Naive thymus-derived CD4-positive, alpha-beta T cell (primary cell): ENCODE measurements at regions of chr5 and their contacts with region 1.

Region 1: GRCh38 chr5:140547508-140548299 is at the start of gene EIF4EBP3:
- DNase-seq: peak; percentile 76 to 90 (median 88)
- ATAC-seq: peak; percentile 98
- H3K4me3 ChIP-seq: peak within 1 kb of the TSS; percentile 83
- H3K4me3 Mint-ChIP-seq: peak within 1 kb of the TSS; percentile 85 to 99 (median 92)
- H3K27ac ChIP-seq: peak within 1 kb of the TSS; percentile 89
- H3K27ac Mint-ChIP-seq: peak within 1 kb of the TSS; percentile 93 to 99 (median 98)
- H3K4me1 ChIP-seq: peaks cover 12 to 20% of the 10 kb centered on the region in 2 donors
- H3K4me1 Mint-ChIP-seq: peaks cover 22 to 49% (median 37%) of the 10 kb centered on the region in 7 donors
- H3K27me3 ChIP-seq: no peaks in the 10 kb centered on the region
- H3K27me3 Mint-ChIP-seq: no peaks in the 10 kb centered on the region
- total RNA-seq, gene EIF4EBP3: 12.5 to 19.5 (median 16.2) TPM

Region 2: GRCh38 chr5:140632150-140633020 is 84.7 kb after region 1 on chr5:
- CTCF ChIA-PET with region 1: interaction called, 12 read pairs
- POLR2A ChIA-PET with region 1: interaction called, 23 read pairs
- intact Hi-C with region 1: loop called (anchors 1 kb)
- DNase-seq: peak; percentile 29 to 64 (median 51)
- ATAC-seq: peak; percentile 81
- H3K4me3 ChIP-seq: peak overlapping the region; percentile 87
- H3K4me3 Mint-ChIP-seq: peak overlapping the region; percentile 89 to 99 (median 92)
- H3K27ac ChIP-seq: peak overlapping the region; percentile 41
- H3K27ac Mint-ChIP-seq: peak overlapping the region; percentile 29 to 88 (median 79)
- H3K4me1 ChIP-seq: peaks cover 0 to 9% of the 10 kb centered on the region in 2 donors
- H3K4me1 Mint-ChIP-seq: peaks cover 16 to 36% (median 17%) of the 10 kb centered on the region in 7 donors
- H3K27me3 ChIP-seq: no peaks in the 10 kb centered on the region
- H3K27me3 Mint-ChIP-seq: peaks cover 0 to 26% (median 0%) of the 10 kb centered on the region in 5 donors

Region 3: DNA sequence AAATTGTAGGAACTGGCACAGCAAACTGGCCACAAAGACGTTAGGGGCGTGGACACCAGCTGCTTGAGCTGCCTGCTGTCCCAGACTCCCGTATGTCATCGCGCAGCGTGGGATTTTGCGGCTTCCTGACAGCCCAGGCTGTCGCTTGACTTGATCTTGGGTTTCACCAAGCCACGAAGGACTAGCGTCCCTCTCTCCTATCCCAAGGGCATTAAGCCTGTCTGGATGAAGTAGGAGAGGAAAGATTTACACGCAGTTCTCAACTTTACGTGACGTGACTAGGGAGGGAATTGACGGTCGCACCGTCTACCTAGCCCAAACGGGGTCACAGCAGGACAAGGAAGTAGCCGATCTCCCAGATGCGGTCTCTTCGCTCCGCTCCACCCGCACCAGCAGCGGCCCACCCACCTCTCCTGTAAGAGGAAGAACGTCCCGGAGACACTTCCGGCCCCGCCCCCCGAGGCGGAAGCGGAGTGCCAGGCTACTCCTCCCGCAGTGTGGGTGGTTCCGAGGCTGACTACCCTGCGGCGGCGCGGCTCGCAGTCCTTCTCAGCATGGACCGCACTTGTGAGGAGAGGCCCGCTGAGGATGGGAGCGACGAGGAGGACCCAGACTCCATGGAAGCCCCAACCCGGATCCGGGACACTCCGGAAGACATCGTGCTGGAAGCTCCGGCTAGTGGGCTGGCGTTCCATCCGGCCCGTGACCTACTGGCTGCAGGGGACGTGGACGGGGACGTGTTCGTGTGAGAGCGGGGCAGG is 116.8 kb after region 1 on chr5 and contains the start of gene WDR55:
- CTCF ChIA-PET with region 1: no interaction called
- POLR2A ChIA-PET with region 1: interaction called, 3 read pairs
- intact Hi-C with region 1: loop called in 1 of 2 experiments (anchors 1 kb)
- DNase-seq: peak; percentile 91 to 98 (median 94)
- ATAC-seq: peak; percentile 97
- H3K4me3 ChIP-seq: peak within 1 kb of the TSS; percentile 95
- H3K4me3 Mint-ChIP-seq: peak within 1 kb of the TSS; percentile 96 to 100 (median 98)
- H3K27ac ChIP-seq: peak within 1 kb of the TSS; percentile 97
- H3K27ac Mint-ChIP-seq: peak within 1 kb of the TSS; percentile 93 to 100 (median 98)
- H3K4me1 ChIP-seq: peaks cover 0 to 8% of the 10 kb centered on the region in 2 donors
- H3K4me1 Mint-ChIP-seq: peaks cover 17 to 48% (median 38%) of the 10 kb centered on the region in 7 donors
- H3K27me3 ChIP-seq: no peaks in the 10 kb centered on the region
- H3K27me3 Mint-ChIP-seq: no peaks in the 10 kb centered on the region
- total RNA-seq, gene WDR55: 28.5 to 47.6 (median 37.8) TPM

Region 4: DNA sequence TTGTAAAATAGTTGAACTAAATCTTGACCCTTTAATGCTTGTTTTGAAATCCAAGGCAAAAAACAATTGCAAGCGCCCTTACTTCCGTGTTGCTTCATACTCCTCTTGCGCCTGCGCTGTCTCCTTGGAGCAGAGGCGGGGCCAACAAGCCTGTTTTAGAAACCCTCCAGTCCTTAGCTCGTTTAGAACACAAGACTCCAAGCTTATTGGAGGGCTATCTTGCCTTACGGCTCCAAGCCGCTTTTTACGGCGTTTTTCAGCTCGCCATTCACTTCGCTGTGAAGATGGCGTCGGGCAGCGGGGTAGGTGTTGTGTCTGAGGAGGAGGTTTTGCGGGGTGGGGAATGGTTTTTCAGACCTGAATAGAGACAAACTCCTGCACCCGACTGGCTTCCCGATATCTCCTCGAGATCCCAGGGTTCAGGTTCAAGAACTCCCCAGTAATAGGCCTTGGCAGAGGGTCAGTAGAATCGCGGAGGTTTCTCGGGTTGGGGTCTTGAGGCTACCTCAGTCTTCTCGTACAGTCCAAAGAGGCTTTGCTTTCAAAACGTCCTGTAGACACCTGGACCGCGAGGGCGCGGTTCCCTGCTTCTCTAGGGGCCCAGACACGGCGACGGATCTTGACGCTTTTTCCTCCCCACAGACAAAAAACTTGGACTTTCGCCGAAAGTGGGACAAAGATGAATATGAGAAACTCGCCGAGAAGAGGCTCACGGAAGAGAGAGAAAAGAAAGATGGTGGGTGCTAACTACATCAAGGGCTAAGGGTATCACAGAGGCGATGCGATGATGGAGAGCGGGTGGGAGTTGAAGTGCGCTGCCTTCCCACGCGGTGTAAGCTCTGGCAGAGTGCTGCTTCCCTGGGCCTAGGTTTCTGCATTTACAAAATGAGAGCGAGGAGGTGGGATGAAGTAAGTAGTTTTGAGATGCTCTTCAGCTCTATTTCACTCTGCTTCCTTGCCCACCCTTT is 152.8 kb after region 1 on chr5 and contains the start of gene ZMAT2:
- CTCF ChIA-PET with region 1: no interaction called
- POLR2A ChIA-PET with region 1: interaction called, 8 read pairs
- intact Hi-C with region 1: loop called (anchors 1 to 5 kb)
- DNase-seq: peak; percentile 74 to 97 (median 92)
- ATAC-seq: peak; percentile 100
- H3K4me3 ChIP-seq: peak within 1 kb of the TSS; percentile 78
- H3K4me3 Mint-ChIP-seq: peak within 1 kb of the TSS; percentile 93 to 100 (median 98)
- H3K27ac ChIP-seq: peak within 1 kb of the TSS; percentile 87
- H3K27ac Mint-ChIP-seq: peak within 1 kb of the TSS; percentile 90 to 99 (median 97)
- H3K4me1 ChIP-seq: peaks cover 4 to 14% of the 10 kb centered on the region in 2 donors
- H3K4me1 Mint-ChIP-seq: peaks cover 18 to 35% (median 29%) of the 10 kb centered on the region in 7 donors
- H3K27me3 ChIP-seq: no peaks in the 10 kb centered on the region
- H3K27me3 Mint-ChIP-seq: no peaks in the 10 kb centered on the region
- total RNA-seq, gene ZMAT2: 37.7 to 63.0 (median 55.1) TPM

Region 5: DNA sequence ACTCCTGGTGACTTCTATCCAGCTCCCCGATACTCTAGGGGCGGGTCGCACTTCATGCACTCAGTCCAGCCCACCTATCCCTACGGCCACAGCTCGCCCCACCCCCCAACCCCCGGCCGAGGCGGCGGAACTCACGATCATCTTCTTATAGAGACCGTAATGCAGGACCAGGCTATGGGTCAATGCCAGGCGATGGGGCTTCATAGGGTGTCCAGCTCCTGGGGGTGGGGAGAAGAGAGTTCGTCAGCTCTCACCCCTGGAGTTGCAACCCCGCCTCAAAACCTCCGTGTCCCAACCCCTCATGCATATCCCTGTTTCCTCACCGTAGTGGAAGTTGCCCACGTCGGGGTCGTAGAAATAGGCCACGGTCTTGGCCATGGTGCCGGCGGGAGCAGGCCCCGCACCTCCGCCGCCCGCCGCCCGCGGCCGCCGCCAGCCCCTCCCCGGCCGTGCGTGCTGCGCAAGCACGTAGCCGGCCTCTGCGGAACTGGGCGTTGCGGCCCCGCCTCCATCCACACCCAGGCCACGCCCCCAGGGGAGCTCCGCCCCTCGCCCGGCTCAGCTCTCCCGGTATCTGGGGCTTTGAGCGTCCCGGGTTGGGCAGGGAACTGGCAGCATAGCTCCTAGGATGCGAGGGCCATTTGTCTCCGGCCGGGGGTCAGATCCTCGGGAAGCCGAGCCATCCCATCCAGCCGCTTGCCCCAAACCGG is 1088.9 kb after region 1 on chr5 and contains the starts of genes HDAC3 and RELL2:
- CTCF ChIA-PET with region 1: no interaction called
- POLR2A ChIA-PET with region 1: no interaction called
- intact Hi-C with region 1: loop called in 1 of 2 experiments (anchors 5 kb)
- DNase-seq: peak; percentile 86 to 99 (median 94)
- ATAC-seq: peak; percentile 98
- H3K4me3 ChIP-seq: peak within 1 kb of the TSS; percentile 81
- H3K4me3 Mint-ChIP-seq: peak within 1 kb of the TSS; percentile 89 to 98 (median 92)
- H3K27ac ChIP-seq: peak within 1 kb of the TSS; percentile 88
- H3K27ac Mint-ChIP-seq: peak within 1 kb of the TSS; percentile 72 to 95 (median 92)
- H3K4me1 ChIP-seq: peaks cover 23 to 24% of the 10 kb centered on the region in 2 donors
- H3K4me1 Mint-ChIP-seq: peaks cover 35 to 56% (median 46%) of the 10 kb centered on the region in 7 donors
- H3K27me3 ChIP-seq: no peaks in the 10 kb centered on the region
- H3K27me3 Mint-ChIP-seq: no peaks in the 10 kb centered on the region
- total RNA-seq, gene HDAC3: 70.0 to 92.8 (median 79.0) TPM
- total RNA-seq, gene RELL2: 14.3 to 21.7 (median 17.5) TPM